ENCODE measurements at regions of chr15 and their contacts with region 1.

Region 1: GRCh38 chr15:49145651-49146609 is 9.5 kb downstream of the COPS2 start:
- DNase-seq: peak; percentile 12 to 38 (median 20)
- H3K4me3 ChIP-seq: no peak overlapping the region
- H3K4me3 Mint-ChIP-seq: no peak overlapping the region
- H3K27ac ChIP-seq: no peak overlapping the region
- H3K27ac Mint-ChIP-seq: peak overlapping the region in 1 of 7 donors; percentile 32
- H3K4me1 ChIP-seq: peaks cover 14 to 19% of the 10 kb centered on the region in 2 donors
- H3K4me1 Mint-ChIP-seq: peaks cover 23% of the 10 kb centered on the region
- H3K27me3 ChIP-seq: no peaks in the 10 kb centered on the region
- H3K27me3 Mint-ChIP-seq: no peaks in the 10 kb centered on the region
- CTCF ChIP-seq: peak; percentile 79

Region 2: DNA sequence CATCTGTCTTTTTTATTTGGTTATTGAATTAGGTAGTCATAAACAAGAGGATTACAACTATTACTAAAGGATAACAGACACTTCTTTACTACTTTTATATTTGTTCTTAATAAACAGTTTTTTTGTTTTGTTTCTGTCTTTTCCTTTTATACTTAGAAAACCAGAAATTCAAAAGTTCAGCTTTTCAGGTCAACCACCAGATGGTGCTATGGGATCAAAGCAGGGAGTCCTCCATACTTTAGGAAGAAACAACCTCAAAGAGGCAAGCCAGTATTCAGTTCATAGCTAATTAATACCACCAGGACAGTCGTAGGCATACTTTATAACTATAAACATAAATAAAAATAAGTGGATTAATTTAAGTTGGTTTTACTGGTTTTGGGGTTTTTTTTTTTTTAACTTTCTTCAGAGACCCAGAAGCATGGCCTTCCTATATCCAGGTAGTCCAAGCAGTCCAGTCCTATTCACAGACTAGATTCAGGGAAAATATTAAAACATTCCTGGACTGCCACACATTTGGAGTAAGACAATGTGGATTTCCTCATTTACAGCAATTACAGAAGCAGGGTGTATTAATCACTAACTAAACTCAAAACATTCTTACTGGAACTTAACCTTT is 284.0 kb before region 1 on chr15:
- intact Hi-C with region 1: loop called in 1 of 2 experiments (anchors 10 kb)
- DNase-seq: peak; percentile 41 to 71 (median 60)
- H3K4me3 ChIP-seq: no peak overlapping the region
- H3K4me3 Mint-ChIP-seq: no peak overlapping the region
- H3K27ac ChIP-seq: no peak overlapping the region
- H3K27ac Mint-ChIP-seq: peak overlapping the region in 1 of 7 donors; percentile 70
- H3K4me1 ChIP-seq: peaks cover 0 to 9% of the 10 kb centered on the region in 2 donors
- H3K4me1 Mint-ChIP-seq: peaks cover 17% of the 10 kb centered on the region
- H3K27me3 ChIP-seq: no peaks in the 10 kb centered on the region
- H3K27me3 Mint-ChIP-seq: peaks cover 1 to 3% (median 3%) of the 10 kb centered on the region in 3 donors
- CTCF ChIP-seq: peak; percentile 87

Region 3: GRCh38 chr15:48914717-48915116 is 231.2 kb before region 1 on chr15:
- intact Hi-C with region 1: no loop called
- DNase-seq: no peak
- H3K4me3 ChIP-seq: no peak overlapping the region
- H3K4me3 Mint-ChIP-seq: no peak overlapping the region
- H3K27ac ChIP-seq: no peak overlapping the region
- H3K27ac Mint-ChIP-seq: no peak overlapping the region
- H3K4me1 ChIP-seq: no peaks in the 10 kb centered on the region
- H3K4me1 Mint-ChIP-seq: no peaks in the 10 kb centered on the region
- H3K27me3 ChIP-seq: no peaks in the 10 kb centered on the region
- H3K27me3 Mint-ChIP-seq: peaks cover 1 to 9% (median 4%) of the 10 kb centered on the region in 3 donors
- CTCF ChIP-seq: no peak

Region 4: DNA sequence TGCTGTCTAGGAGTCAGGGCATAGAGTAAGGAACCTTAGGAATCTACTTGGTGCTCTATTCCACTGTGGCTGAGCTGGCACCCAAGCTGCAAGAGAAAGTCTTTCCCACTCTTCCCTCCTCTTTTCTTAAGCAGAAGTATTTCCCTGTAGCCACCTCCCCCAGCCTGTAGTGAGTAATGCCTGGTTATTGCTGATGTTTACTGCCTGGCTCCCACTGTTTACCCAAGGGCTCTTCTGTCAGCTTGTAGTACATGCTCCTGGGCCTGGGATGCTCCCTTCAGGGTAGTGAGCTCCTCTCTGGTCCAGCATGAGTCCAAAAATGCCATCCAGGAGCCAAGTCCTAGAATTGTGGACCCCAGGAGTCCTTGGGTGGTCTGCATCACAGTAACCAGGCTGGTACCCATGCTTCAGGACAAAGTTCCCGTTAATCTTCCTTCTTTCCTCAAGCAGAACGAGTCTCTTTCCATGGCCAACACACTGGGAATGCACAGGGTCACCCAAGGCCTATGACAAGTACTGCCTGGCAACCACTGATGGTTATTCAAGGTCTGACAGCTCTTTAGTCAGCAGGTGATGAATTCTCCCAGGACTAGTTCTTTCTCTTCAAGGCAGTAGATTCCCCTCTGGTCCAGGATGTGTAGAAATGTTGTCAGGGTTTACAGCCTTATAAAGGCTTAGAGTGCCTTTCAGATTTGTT is 41.8 kb after region 1 on chr15:
- intact Hi-C with region 1: no loop called
- DNase-seq: no peak
- H3K4me3 ChIP-seq: no peak overlapping the region
- H3K4me3 Mint-ChIP-seq: no peak overlapping the region
- H3K27ac ChIP-seq: no peak overlapping the region
- H3K27ac Mint-ChIP-seq: no peak overlapping the region
- H3K4me1 ChIP-seq: peaks cover 4 to 7% of the 10 kb centered on the region in 2 donors
- H3K4me1 Mint-ChIP-seq: peaks cover 9% of the 10 kb centered on the region
- H3K27me3 ChIP-seq: no peaks in the 10 kb centered on the region
- H3K27me3 Mint-ChIP-seq: peaks cover 0 to 3% (median 0%) of the 10 kb centered on the region in 3 donors
- CTCF ChIP-seq: no peak

Region 5: DNA sequence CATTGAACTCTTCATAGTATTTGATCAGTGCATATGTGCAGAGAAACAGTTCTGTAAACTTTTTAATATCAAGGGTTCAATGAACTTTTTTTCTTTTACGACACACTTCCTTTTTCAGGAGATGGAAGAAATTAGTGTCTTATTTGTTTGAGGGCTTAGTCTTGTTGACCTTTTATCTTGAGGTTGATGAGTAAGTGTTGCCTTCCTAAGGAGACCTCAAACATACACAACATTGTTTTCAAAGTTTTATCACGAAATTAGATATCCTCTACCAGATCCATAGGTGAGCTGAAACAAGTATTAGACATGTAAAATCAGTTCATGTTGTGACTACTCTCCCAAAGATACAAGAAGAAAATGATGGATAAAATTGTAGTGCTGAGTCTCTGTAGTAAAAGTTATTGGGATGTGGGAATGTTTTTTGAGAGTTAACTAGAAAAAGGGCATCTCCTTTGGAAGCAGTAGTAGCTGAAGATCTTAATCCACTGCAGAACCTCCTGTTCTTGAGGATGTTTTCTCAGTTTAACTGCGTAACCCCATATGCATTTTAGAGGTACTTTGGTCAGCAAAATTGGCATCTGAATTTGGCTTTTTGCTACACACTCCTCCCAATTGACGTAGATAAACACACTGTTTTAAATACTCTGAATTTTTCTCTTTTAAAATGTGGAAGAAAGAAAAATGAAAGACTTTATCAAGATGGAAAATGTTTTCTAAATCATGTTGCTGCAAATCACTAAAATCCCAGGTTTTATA is 140.9 kb after region 1 on chr15:
- intact Hi-C with region 1: no loop called
- DNase-seq: no peak
- H3K4me3 ChIP-seq: no peak overlapping the region
- H3K4me3 Mint-ChIP-seq: no peak overlapping the region
- H3K27ac ChIP-seq: no peak overlapping the region
- H3K27ac Mint-ChIP-seq: no peak overlapping the region
- H3K4me1 ChIP-seq: no peaks in the 10 kb centered on the region
- H3K4me1 Mint-ChIP-seq: no peaks in the 10 kb centered on the region
- H3K27me3 ChIP-seq: no peaks in the 10 kb centered on the region
- H3K27me3 Mint-ChIP-seq: peaks cover 0 to 1% (median 0%) of the 10 kb centered on the region in 3 donors
- CTCF ChIP-seq: no peak

Measured in CD14-positive monocyte (primary cell).